Posterior cingulate gyrus (tissue), 11 donors: ENCODE measurements at regions of chr1 and their contacts with region 1.

Region 1: GRCh38 chr1:39955547-39956539 is 898 bp downstream of the MFSD2A start:
- DNase-seq: peak in 4 of 10 donors; percentile 26 to 85 (median 80)

Region 2: DNA sequence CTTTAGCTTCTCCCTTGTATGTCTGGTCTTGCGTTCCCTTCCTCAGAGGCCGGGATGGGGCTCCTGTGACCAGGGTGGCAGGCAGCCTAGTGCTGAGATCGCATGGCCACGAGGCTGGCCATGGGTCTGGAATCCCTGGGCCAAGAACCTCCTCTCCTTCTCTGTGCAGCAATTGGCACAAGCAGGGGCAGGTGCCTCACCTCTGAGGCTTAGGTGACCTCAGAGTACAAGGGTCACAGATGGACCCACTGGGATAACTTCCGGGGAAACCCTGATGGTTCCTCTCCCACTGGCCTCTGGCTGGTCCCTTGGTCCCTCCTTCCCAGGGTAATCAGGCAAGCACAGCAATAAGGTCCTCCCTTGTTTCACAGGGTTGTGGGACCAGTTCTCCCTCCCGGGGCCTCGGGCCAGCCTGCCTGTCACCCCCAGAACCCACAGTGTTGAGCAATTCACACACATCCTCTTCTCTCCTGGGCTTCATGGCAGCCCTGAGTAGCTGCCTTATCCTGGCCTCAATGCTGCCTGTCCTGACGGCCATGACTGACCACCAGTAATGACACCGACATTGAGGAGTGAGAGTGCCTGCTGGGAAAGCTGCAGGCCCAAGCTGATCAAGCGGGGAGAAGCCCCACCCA is 425.8 kb before region 1 on chr1:
- intact Hi-C with region 1: no loop called
- DNase-seq: peak in 1 of 10 donors; percentile 59

Region 3: GRCh38 chr1:40040511-40041465 is 84.9 kb after region 1 on chr1 and contains the start of gene CAP1:
- intact Hi-C with region 1: loop called (anchors 2 kb)
- DNase-seq: peak; percentile 98 to 100 (median 99)